ENCODE measurements at regions of chr6 and their contacts with region 1.

Region 1: DNA sequence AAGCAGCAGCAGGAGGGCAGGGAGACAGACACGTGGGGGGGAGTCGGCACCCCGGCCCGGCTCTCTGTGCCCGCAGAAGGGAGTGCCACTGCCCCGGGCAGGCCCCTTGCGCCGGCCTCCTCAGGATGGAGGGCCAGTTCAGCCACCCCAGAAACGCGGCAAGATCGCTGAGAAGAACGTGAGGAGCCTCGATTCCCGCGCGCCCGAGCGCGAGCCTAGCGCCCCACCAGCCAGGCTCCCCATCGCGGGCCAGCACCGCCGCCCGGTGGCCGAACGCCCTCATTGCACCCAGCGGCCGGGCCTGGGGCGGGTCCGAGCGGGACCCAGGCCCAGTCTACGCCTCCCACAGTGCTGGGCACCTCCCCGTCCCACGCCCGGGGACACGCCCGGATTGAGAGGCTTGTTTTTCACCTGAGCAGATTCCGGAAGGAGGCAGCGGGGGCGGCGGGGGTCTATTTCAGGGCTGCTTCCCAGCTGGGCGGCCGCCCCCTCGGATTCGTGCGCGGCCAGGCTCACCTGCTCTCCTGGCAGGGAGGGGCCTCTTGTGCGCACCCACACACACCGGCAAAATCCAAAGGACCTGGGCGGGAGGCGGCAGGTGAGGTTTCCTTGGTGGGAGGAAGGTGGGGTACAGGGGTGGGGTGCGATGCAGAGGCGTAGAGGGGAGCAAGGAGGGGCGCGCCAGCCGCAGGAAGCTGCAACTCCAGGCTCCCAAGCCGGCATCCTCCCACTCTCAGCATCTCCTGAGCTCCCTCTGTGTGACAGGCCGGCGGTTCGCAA is 9.0 kb upstream of the GRM4 start:
- DNase-seq: peak; percentile 48
- H3K4me3 ChIP-seq: no peak overlapping the region
- H3K27ac ChIP-seq: no peak overlapping the region
- H3K4me1 ChIP-seq: no peaks in the 10 kb centered on the region
- H3K27me3 ChIP-seq: peaks cover 12% of the 10 kb centered on the region
- CTCF ChIP-seq: peak; percentile 96

Region 2: DNA sequence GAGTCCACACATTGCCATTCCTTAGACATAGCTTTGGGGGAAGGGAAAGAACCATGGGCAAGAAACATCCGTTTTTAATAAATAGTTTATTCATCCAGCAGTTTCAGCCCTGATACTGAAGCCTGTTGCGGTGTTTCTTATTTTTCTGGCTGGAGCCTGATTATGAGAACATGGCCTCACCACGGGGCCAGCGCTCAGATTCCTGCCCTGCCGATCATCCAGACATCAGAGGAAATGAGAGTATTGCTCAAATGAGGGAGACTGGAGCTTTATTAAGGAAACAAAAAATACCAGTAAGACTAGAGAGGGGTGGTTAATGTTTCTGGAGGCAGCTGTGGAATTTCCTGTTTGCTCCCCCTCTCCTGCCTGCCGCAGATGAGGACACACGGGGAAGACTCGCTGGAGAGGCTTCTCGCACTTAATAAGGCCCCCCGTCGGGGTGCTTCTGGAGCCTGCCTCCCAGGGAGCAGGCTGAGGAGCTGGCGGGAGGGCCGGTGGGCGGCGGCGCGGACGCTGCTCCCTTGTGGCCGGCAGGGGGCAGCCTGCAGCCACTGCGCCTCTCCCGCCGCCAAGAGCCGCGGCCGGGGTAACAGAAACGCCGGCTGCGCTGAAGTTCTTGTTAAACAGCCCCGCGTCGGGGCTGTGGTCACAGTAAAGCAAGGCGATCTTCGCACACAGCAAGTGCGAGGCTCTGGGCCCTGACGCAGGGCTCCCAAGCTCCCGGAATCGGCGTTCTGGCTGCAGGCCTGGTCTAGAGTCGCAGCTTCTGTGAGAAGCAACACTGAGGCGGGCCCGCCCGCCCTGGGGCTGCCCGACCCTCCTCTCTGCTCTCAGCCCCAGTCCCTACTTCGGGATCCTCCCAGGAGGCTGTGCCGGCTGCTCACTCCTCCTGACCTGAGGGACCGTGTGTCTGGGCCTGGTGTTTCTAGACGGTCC is 383.4 kb before region 1 on chr6:
- intact Hi-C with region 1: loop called (anchors 5 kb)
- DNase-seq: peak; percentile 56
- H3K4me3 ChIP-seq: no peak overlapping the region
- H3K27ac ChIP-seq: peak overlapping the region; percentile 19
- H3K4me1 ChIP-seq: peaks cover 4% of the 10 kb centered on the region
- H3K27me3 ChIP-seq: no peaks in the 10 kb centered on the region
- CTCF ChIP-seq: peak; percentile 98

Region 3: GRCh38 chr6:33967966-33968724 is 186.7 kb before region 1 on chr6:
- intact Hi-C with region 1: loop called (anchors 10 kb)
- DNase-seq: peak; percentile 57
- H3K4me3 ChIP-seq: no peak overlapping the region
- H3K27ac ChIP-seq: no peak overlapping the region
- H3K4me1 ChIP-seq: no peaks in the 10 kb centered on the region
- H3K27me3 ChIP-seq: no peaks in the 10 kb centered on the region
- CTCF ChIP-seq: peak; percentile 29

Region 4: GRCh38 chr6:34055223-34055933 is 99.5 kb before region 1 on chr6:
- intact Hi-C with region 1: loop called (anchors 5 kb)
- DNase-seq: peak; percentile 54
- H3K4me3 ChIP-seq: no peak overlapping the region
- H3K27ac ChIP-seq: no peak overlapping the region
- H3K4me1 ChIP-seq: no peaks in the 10 kb centered on the region
- H3K27me3 ChIP-seq: no peaks in the 10 kb centered on the region
- CTCF ChIP-seq: peak; percentile 71